Colonic mucosa (tissue), 4 donors: ENCODE measurements at regions of chr19 and their contacts with region 1.

Region 1: GRCh38 chr19:55549500-55550320 is 4.4 kb upstream of the SBK3 start:
- DNase-seq: peak; percentile 40
- H3K4me3 ChIP-seq: peak overlapping the region; percentile 3
- H3K27ac ChIP-seq: peak overlapping the region; percentile 8
- H3K4me1 ChIP-seq: no peaks in the 10 kb centered on the region
- H3K27me3 ChIP-seq: no peaks in the 10 kb centered on the region
- CTCF ChIP-seq: no peak

Region 2: GRCh38 chr19:55586976-55587668 is 37.4 kb after region 1 on chr19:
- intact Hi-C with region 1: loop called (anchors 5 kb)
- DNase-seq: peak; percentile 99
- H3K4me3 ChIP-seq: peak overlapping the region; percentile 31
- H3K27ac ChIP-seq: no peak overlapping the region
- H3K4me1 ChIP-seq: peaks cover 3% of the 10 kb centered on the region
- H3K27me3 ChIP-seq: no peaks in the 10 kb centered on the region
- CTCF ChIP-seq: no peak